PC-9 (cell line): ENCODE measurements at regions of chr1 and their contacts with region 1.

Region 1: GRCh38 chr1:151968058-151968457 is 25.6 kb downstream of the S100A10 start:
- DNase-seq: peak in 1 of 2 experiments; percentile 51
- H3K4me3 ChIP-seq: no peak overlapping the region
- H3K27ac ChIP-seq: no peak overlapping the region
- H3K4me1 ChIP-seq: peaks cover 60% of the 10 kb centered on the region
- H3K27me3 ChIP-seq: no peaks in the 10 kb centered on the region
- CTCF ChIP-seq: peak; percentile 70

Region 2: DNA sequence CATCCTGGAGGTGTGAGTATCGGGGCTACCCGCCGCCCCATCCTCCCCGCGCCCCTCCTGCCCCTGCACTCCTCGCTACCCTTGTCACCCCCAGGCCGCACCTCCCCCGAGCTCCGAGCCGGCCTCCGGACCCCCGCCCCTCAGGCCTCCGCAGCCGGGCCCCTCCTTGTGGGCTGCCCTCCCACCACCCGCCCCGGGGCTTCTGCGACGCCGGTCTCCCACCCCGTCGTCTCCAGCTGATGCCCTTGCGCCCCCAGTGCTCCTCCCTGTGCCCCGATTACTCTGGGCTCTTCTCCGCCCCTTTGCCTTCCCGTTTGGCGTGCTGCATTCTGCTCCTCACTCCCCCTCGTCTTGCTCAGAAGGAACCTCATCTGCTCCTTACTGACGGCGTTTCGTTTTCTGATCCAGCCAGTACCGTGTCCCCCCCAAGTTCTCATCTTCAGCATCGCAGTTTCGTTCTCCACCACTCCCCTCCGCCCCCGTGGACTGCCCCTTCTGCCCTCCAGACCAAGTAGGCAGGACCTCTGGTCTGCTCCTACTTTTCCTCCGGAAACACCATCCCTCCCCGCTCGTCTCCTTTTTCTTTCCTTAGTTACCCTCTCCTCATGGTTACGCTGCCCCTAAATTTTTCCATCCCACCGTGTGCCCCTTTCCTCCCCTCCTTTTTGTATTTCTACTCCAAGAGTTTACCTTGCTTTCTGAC is 355.4 kb before region 1 on chr1:
- CTCF ChIA-PET with region 1: no interaction called
- POLR2A ChIA-PET with region 1: no interaction called
- intact Hi-C with region 1: no loop called
- DNase-seq: peak in 1 of 2 experiments; percentile 21
- H3K4me3 ChIP-seq: peak overlapping the region; percentile 71
- H3K27ac ChIP-seq: no peak overlapping the region
- H3K4me1 ChIP-seq: peaks cover 68% of the 10 kb centered on the region
- H3K27me3 ChIP-seq: no peaks in the 10 kb centered on the region
- CTCF ChIP-seq: no peak

Region 3: DNA sequence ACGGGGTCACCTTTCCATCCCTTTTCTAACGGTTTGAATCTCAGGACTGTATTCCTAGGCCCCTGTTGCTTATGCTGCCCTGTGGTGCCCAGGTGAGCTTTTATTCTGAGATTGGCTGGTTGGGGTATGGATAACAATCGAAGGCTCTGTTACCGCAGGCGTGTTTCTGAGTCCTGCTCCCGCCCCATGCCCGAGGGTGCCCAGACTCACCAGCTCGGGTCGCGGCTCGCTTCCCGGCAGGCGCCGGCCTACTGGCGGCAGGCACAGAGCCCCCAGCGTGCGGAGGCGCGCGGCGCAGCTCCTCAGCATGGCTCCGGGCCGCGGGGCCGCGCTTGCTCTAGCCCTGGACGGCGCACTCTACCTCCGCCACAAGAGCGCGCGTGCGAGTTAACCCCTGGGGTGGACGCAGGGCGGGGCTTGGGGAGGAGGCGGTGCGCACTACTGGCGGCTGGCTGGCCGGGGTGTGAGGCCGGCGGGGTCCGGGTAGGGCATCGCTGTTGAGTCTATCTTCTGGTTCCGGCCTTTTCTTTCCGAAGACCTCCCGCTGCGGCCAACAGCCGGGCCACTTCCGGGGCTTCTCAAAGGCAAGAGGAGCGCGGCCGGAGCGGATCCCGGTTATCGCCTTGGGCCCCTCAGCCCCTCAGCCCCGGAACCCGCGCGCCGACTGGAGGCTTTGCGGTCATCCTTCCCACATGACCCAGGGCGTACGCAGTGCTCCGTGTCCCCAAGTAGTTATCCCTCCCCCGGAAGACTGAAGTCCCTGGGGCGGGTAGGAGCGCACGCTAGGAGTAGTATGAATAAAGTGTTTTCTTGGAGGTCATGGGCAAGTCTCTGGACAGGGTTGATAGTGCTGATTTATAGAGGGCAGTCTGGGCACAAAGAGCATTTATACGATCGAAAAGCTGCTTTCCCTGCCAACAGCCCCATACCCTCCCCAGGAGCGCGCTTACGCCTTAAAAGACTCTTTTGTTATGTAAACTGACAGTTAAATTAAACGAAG is 58.6 kb before region 1 on chr1 and contains the start of gene THEM4:
- CTCF ChIA-PET with region 1: interaction called, 3 read pairs
- POLR2A ChIA-PET with region 1: interaction called, 7 read pairs
- intact Hi-C with region 1: loop called (anchors 2 kb)
- DNase-seq: peak; percentile 87 to 98
- H3K4me3 ChIP-seq: peak within 1 kb of the TSS; percentile 78
- H3K27ac ChIP-seq: peak within 1 kb of the TSS; percentile 84
- H3K4me1 ChIP-seq: peaks cover 30% of the 10 kb centered on the region
- H3K27me3 ChIP-seq: no peaks in the 10 kb centered on the region
- CTCF ChIP-seq: no peak
- total RNA-seq, gene THEM4: 24.1 and 41.4 TPM in 2 replicates

Region 4: DNA sequence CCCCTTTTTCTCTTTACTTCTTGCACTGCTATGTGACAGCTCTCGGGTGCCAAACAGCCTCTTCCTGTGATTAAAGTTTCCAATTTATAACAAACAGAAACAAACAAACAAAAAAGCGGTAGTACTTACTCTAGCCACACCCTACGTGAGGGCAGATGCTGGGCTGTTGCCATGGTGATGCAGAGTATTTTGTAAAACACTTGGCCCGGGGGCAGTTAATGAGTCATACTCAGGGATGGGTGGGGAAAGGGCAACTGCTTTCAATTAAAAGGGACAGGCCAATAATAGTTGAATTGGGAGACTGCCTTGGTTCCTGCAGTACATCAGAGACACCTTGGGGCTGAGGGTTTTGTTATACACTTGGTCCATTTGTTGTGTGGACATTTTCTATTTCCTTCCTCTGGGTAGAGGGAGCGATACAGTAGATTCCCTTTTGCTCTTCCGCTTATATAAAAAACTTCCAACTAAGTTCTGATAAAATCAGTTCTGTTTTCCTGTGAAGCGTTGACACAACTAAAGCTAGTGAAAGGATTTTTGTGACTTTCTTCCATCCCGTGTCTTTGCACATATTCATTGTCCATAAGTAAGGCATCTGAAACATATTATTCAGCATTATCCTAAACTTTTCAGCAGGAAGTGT is 22.2 kb before region 1 on chr1:
- CTCF ChIA-PET with region 1: interaction called, 3 read pairs
- POLR2A ChIA-PET with region 1: interaction called, 8 read pairs
- intact Hi-C with region 1: loop called (anchors 1 kb)
- DNase-seq: peak; percentile 96 to 97
- H3K4me3 ChIP-seq: peak overlapping the region; percentile 35; the same call in 1 of the 2 replicates
- H3K27ac ChIP-seq: peak overlapping the region; percentile 91
- H3K4me1 ChIP-seq: peaks cover 72% of the 10 kb centered on the region
- H3K27me3 ChIP-seq: no peaks in the 10 kb centered on the region
- CTCF ChIP-seq: no peak

Region 5: GRCh38 chr1:152024158-152024557 is 56.1 kb after region 1 on chr1:
- CTCF ChIA-PET with region 1: no interaction called
- POLR2A ChIA-PET with region 1: interaction called, 6 read pairs
- intact Hi-C with region 1: loop called (anchors 2 kb)
- DNase-seq: peak; percentile 73 to 96
- H3K4me3 ChIP-seq: peak overlapping the region; percentile 11; the same call in 1 of the 2 replicates
- H3K27ac ChIP-seq: peak overlapping the region; percentile 94
- H3K4me1 ChIP-seq: peaks cover 63% of the 10 kb centered on the region
- H3K27me3 ChIP-seq: no peaks in the 10 kb centered on the region
- CTCF ChIP-seq: no peak

Region 6: GRCh38 chr1:152707860-152708259 is 739.8 kb after region 1 on chr1 and contains the start of gene LCE4A:
- CTCF ChIA-PET with region 1: no interaction called
- POLR2A ChIA-PET with region 1: no interaction called
- intact Hi-C with region 1: no loop called
- DNase-seq: no peak
- H3K4me3 ChIP-seq: no peak within 1 kb of the TSS
- H3K27ac ChIP-seq: no peak within 1 kb of the TSS
- H3K4me1 ChIP-seq: no peaks in the 10 kb centered on the region
- H3K27me3 ChIP-seq: no peaks in the 10 kb centered on the region; the same call in 1 of the 2 replicates
- CTCF ChIP-seq: no peak
- total RNA-seq, gene LCE4A: not detected in 2 replicates